CD14-positive monocyte (primary cell): ENCODE measurements at regions of chr2 and their contacts with region 1.

Region 1: DNA sequence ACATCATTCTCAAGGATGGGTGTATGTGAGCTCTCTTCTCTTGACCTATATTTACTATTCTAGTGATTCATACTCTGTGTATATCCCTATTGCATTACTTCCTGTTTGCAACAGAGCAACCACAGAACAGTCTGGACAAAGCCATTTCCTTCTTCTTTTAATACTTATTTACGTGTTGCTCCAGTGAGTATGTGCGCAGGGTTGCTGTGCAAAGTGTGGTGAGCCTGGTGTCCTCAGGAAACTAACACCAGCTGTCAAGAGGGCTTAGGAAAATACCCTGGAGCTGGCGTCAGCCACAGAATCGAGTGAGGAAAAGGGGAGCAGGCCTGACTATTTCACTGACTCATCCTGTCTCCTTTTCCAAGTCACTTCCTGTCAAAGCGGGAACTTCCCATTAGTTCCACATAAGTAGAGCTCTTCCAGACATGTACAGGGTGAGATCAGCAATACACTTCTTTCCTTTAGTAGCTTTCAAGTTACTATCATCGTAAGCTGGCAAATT is 214.1 kb upstream of the COPS8 start:
- DNase-seq: peak; percentile 92 to 99 (median 99)
- H3K4me3 ChIP-seq: peak overlapping the region in 2 of 3 experiments; percentile 0 to 32
- H3K4me3 Mint-ChIP-seq: peak overlapping the region; percentile 41 to 75
- H3K27ac ChIP-seq: peak overlapping the region; percentile 47 to 91
- H3K27ac Mint-ChIP-seq: peak overlapping the region; percentile 91 to 97 (median 94)
- H3K4me1 ChIP-seq: peaks cover 55 to 67% of the 10 kb centered on the region in 2 donors
- H3K4me1 Mint-ChIP-seq: peaks cover 75% of the 10 kb centered on the region
- H3K27me3 ChIP-seq: peaks cover 19 to 29% of the 10 kb centered on the region in 2 donors
- H3K27me3 Mint-ChIP-seq: peaks cover 26 to 37% (median 30%) of the 10 kb centered on the region in 3 donors
- CTCF ChIP-seq: no peak

Region 2: DNA sequence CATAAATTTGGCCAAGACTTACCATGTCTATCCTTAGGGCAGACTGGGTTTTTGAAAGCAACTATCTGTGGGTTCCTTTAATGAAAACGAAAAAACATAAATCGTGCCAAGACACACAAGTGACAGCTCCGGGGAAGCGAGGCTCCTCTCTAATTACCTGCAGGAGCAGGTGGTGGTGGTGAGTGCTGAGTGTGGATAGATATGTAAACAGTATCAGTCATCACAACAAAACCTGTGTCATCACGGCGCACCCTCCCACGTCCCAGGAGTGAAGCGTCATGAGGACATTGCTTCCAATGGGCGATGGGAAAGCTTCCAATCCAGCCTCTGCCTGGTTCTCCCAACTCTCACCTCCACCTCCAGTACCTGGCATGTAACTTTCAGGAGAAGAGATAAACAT is 270.7 kb before region 1 on chr2:
- intact Hi-C with region 1: no loop called
- DNase-seq: no peak
- H3K4me3 ChIP-seq: no peak overlapping the region
- H3K4me3 Mint-ChIP-seq: no peak overlapping the region
- H3K27ac ChIP-seq: no peak overlapping the region
- H3K27ac Mint-ChIP-seq: no peak overlapping the region
- H3K4me1 ChIP-seq: peaks cover 6 to 9% of the 10 kb centered on the region in 2 donors
- H3K4me1 Mint-ChIP-seq: peaks cover 9% of the 10 kb centered on the region
- H3K27me3 ChIP-seq: peaks cover 0 to 10% of the 10 kb centered on the region in 2 donors
- H3K27me3 Mint-ChIP-seq: peaks cover 8 to 31% (median 24%) of the 10 kb centered on the region in 3 donors
- CTCF ChIP-seq: no peak

Region 3: GRCh38 chr2:236745420-236746197 is 125.9 kb before region 1 on chr2:
- intact Hi-C with region 1: loop called (anchors 1 to 10 kb)
- DNase-seq: no peak
- H3K4me3 ChIP-seq: no peak overlapping the region
- H3K4me3 Mint-ChIP-seq: no peak overlapping the region
- H3K27ac ChIP-seq: no peak overlapping the region
- H3K27ac Mint-ChIP-seq: no peak overlapping the region
- H3K4me1 ChIP-seq: peaks cover 61 to 66% of the 10 kb centered on the region in 2 donors
- H3K4me1 Mint-ChIP-seq: peaks cover 67% of the 10 kb centered on the region
- H3K27me3 ChIP-seq: no peaks in the 10 kb centered on the region
- H3K27me3 Mint-ChIP-seq: peaks cover 0 to 4% (median 1%) of the 10 kb centered on the region in 3 donors
- CTCF ChIP-seq: no peak

Region 4: GRCh38 chr2:236972491-236973342 is 101.2 kb after region 1 on chr2:
- intact Hi-C with region 1: loop called in 1 of 2 experiments (anchors 5 kb)
- DNase-seq: peak; percentile 35 to 86 (median 56)
- H3K4me3 ChIP-seq: no peak overlapping the region
- H3K4me3 Mint-ChIP-seq: peak overlapping the region; percentile 20 to 23
- H3K27ac ChIP-seq: peak overlapping the region; percentile 35 to 52
- H3K27ac Mint-ChIP-seq: peak overlapping the region; percentile 30 to 93 (median 92)
- H3K4me1 ChIP-seq: peaks cover 75 to 82% of the 10 kb centered on the region in 2 donors
- H3K4me1 Mint-ChIP-seq: peaks cover 88% of the 10 kb centered on the region
- H3K27me3 ChIP-seq: no peaks in the 10 kb centered on the region
- H3K27me3 Mint-ChIP-seq: peaks cover 10 to 17% (median 17%) of the 10 kb centered on the region in 3 donors
- CTCF ChIP-seq: no peak

Region 5: DNA sequence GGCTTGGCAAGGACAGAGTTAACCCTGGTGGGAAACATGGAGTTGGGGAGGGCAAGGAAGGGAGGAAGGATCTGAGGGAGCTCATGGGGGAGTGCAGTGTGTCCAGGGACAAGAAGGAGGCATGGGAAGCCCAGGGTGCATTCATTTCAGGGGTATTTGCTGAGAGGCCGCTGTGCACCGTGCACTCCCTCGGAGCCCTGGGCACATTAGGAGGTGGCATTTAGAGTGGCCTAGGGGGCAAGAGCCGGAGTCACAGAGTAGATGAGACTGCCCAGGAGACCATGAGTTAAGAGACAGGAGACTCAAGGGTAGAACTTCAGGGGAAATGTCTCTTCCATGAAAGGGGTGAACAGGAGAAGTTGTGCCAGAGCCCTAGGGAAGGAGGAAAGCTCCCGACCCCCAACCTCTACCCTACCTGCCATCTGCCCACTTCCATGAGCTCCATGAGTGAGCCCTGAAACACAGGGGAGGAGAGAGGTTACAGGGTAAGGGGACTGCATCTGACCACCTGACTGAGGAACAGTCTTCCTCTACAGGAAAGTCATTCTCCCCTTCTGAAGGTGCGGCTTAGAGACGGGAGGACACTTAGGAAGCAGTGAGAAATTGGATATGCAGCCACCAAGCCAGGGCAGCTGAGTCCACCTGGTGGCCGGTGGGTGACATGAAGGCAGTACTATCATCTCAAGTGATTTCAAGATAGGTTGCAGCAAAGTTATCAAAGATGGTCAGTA is 155.6 kb after region 1 on chr2:
- intact Hi-C with region 1: loop called in 1 of 2 experiments (anchors 5 kb)
- DNase-seq: peak; percentile 32 to 62 (median 52)
- H3K4me3 ChIP-seq: no peak overlapping the region
- H3K4me3 Mint-ChIP-seq: no peak overlapping the region
- H3K27ac ChIP-seq: no peak overlapping the region
- H3K27ac Mint-ChIP-seq: no peak overlapping the region
- H3K4me1 ChIP-seq: no peaks in the 10 kb centered on the region
- H3K4me1 Mint-ChIP-seq: no peaks in the 10 kb centered on the region
- H3K27me3 ChIP-seq: no peaks in the 10 kb centered on the region
- H3K27me3 Mint-ChIP-seq: peaks cover 6 to 10% (median 9%) of the 10 kb centered on the region in 3 donors
- CTCF ChIP-seq: peak; percentile 76